ENCODE measurements at regions of chr6 and their contacts with region 1.

Region 1: DNA sequence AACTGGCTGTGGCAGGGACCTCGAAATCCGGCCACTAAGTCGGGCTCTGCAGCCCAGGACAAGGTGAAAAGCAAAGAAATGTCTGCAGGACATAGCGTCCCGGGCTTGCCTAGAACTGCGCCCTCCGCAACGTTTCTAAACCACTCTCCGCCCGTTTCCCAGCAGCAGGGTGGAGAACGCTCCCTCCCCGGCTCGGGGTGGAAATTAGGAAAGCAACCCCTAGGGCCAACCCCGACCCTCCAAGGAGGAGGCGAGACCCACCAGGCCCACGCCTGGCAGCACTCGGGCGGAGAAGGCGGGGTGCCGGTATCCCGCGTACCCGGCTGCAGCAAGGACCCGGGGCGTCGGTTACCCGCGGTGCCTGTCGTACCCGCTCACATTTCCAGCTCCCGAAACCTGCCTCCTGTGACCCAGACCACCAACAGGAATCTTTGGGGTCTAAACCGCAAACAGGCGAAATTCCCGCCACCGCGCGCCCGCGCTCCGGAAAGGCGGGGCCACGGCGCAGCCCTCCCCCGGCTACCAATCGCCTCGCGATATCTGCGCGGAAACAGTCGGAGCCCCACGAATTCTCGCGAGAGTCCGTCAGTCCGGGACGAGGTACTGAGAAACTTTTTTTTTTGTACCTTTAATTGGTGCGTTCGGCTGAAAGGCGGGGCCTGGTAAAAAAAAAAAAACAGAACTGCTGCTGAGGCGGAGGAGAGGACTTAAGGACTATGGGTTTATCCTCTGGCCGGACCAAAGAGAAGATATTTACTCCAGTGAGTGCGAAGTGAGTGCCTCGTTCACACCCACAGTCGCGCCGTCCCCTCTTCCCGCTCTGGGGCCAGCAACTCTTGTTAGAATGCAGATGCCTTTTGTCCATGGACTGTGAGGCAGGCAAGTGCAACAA is at the start of gene MMS22L:
- DNase-seq: peak; percentile 92 to 95
- H3K4me3 ChIP-seq: peak within 1 kb of the TSS; percentile 94
- H3K27ac ChIP-seq: peak within 1 kb of the TSS; percentile 67 to 73
- H3K4me1 ChIP-seq: peaks cover 0 to 9% (median 2%) of the 10 kb centered on the region in 4 donors
- H3K27me3 ChIP-seq: no peaks in the 10 kb centered on the region
- CTCF ChIP-seq: no peak

Region 2: GRCh38 chr6:96521644-96522464 is 761.1 kb before region 1 on chr6 and contains the start of gene UFL1:
- intact Hi-C with region 1: loop called (anchors 5 kb)
- DNase-seq: peak; percentile 95 to 97
- H3K4me3 ChIP-seq: peak within 1 kb of the TSS; percentile 60 to 71
- H3K27ac ChIP-seq: peak within 1 kb of the TSS; percentile 85 to 92
- H3K4me1 ChIP-seq: peaks cover 0 to 26% (median 16%) of the 10 kb centered on the region in 4 donors
- H3K27me3 ChIP-seq: no peaks in the 10 kb centered on the region
- CTCF ChIP-seq: no peak

Region 3: DNA sequence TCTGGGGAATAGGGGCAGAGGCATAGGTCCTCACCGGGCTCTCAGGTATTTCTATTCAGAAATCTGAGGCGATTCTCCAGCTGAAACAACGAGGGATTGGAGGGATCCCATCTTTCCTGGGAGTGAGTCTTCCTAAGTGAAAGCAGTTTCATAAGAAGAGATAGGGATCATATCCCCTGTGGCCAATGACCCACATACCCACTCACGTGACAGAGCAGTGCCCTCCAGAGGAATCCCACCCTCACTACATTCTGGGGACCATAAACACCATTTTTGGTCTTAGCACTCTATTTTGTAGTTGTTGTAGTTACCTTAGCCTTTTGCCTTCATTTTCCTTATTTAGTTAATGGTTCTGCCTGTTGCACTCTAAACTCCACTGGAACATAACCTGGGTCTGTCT is 566.8 kb before region 1 on chr6:
- intact Hi-C with region 1: no loop called
- DNase-seq: no peak
- H3K4me3 ChIP-seq: no peak overlapping the region
- H3K27ac ChIP-seq: no peak overlapping the region
- H3K4me1 ChIP-seq: no peaks in the 10 kb centered on the region
- H3K27me3 ChIP-seq: no peaks in the 10 kb centered on the region
- CTCF ChIP-seq: no peak